ENCODE measurements at regions of chr14 and their contacts with region 1.

Region 1: DNA sequence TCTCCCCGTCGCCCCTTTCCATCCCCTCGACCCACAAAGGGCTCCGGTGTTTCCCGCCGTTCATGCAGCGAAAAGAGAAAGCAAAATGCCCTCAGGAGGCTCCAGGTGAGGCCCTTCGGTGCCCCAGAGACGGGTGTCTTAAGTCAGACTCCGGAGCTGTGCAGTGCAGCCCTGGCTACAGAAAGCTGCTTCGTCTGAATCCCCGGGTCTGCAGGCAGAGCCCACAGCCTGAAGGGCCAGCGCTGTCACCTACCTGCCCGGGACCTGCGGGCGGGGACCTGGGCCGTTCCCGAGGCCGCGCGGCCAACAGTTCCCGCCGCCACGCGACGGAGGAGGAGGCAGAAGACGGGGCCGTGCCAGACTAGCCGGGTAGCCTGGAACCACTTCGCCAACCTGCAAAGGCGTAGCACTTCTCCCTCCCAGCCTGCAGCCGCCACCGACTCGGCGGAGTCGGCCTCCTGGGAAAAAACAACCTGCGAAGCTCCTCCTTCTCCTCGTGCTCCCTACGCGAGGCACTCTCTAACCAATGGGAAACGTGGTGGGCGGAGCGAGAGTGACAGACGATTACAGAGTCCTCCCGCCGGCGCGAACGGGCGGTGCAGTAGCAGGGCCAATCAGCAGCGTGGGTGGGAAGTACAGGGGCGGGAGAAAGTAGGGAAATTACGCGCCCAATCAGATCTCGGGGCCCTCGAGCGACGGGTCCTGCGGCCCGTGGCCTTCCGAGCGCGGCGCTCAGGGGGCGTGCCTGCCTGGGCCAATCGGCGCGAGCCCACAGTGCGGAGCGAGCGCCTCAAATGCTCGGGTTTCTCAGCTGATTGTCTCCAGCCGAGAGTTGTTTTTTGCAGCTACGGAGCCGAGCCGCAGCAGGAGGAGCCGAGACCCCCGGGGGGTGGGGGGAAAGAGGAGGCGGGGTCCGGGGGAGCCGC is at the starts of genes GPR137C and TXNDC16:
- DNase-seq: peak; percentile 100
- H3K4me3 Mint-ChIP-seq: peak within 1 kb of the TSS; percentile 93
- H3K27ac Mint-ChIP-seq: peak within 1 kb of the TSS; percentile 77
- H3K4me1 Mint-ChIP-seq: peaks cover 29% of the 10 kb centered on the region
- H3K27me3 Mint-ChIP-seq: peaks cover 29% of the 10 kb centered on the region
- total RNA-seq, gene GPR137C: 0.07 and 0.24 TPM in 2 replicates
- total RNA-seq, gene TXNDC16: 4.7 and 6.2 TPM in 2 replicates

Region 2: DNA sequence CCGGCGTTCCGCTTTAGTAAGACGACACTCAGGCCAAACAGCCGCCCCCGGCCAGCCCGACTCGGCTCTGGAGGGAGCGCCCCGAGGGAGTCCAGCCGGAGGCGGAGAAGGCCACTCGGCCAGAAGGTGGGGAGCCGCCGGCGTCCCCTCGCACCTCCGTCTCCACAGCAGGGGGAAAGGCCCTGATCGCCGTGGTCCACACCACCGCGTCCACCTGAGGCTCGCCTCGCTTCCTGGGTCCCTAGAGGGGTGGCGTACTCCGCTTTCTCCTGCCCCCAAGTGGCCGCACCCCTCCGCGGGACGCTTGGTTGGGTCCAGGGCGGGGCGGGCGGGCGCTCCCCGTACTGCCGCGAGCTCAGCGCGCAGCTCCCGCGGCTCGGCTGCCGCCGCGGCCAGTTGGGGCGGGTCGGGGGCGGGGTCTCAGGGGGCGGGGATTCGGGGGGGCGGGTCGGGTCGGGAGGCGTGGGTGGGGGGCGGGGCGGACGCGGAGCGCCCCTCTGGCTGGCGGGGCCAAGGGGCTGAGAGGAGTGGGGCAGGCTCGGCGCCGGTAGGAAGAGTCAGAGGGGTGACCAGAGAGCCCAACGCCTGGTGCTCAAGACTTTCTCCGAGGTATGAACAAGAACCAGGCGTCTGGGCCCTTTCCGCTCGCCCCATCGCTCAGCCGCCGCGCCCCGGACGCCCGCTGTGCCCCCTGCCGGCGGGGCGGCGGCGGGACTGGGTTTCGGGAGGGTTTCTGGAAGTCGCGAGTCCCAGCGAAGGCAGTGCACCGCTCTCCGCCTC is 900.7 kb before region 1 on chr14 and contains the start of gene FRMD6:
- intact Hi-C with region 1: loop called (anchors 5 kb)
- DNase-seq: peak; percentile 94
- H3K4me3 Mint-ChIP-seq: peak within 1 kb of the TSS; percentile 88
- H3K27ac Mint-ChIP-seq: peak within 1 kb of the TSS; percentile 78
- H3K4me1 Mint-ChIP-seq: peaks cover 19% of the 10 kb centered on the region
- H3K27me3 Mint-ChIP-seq: peaks cover 17% of the 10 kb centered on the region
- total RNA-seq, gene FRMD6: 5.5 and 7.4 TPM in 2 replicates

Region 3: DNA sequence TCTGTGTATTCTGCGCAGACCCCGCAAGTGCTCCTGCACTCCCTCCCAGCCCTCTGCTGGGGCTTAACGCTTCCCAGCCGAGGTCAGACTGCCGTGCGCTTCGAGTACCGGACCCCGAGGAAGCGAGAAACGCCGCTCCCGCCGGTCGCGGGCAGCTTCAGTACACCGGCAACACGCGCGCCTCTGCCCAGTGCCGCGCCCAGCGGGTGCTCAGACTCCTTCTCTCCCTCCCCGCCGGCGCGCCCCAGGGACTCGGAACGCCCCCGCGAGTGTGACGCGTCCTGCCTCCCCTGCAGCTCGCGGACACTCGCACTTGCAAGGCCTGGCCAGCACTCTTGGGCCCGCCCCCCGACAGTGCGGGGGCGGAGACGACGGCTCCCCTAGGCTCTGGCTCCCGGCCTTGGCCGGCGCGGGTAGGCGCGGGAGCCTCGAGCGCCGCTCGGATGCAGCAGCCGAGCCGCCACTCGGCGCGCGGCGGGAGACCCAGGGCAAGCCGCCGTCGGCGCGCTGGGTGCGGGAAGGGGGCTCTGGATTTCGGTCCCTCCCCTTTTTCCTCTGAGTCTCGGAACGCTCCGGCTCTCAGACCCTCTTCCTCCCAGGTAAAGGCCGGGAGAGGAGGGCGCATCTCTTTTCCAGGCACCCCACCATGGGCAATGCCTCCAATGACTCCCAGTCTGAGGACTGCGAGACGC is 238.3 kb before region 1 on chr14 and contains the start of gene PTGER2:
- intact Hi-C with region 1: loop called (anchors 2 kb)
- DNase-seq: peak; percentile 97
- H3K4me3 Mint-ChIP-seq: peak within 1 kb of the TSS; percentile 99
- H3K27ac Mint-ChIP-seq: peak within 1 kb of the TSS; percentile 99
- H3K4me1 Mint-ChIP-seq: peaks cover 62% of the 10 kb centered on the region
- H3K27me3 Mint-ChIP-seq: no peaks in the 10 kb centered on the region
- total RNA-seq, gene PTGER2: 66.7 and 69.9 TPM in 2 replicates

Region 4: DNA sequence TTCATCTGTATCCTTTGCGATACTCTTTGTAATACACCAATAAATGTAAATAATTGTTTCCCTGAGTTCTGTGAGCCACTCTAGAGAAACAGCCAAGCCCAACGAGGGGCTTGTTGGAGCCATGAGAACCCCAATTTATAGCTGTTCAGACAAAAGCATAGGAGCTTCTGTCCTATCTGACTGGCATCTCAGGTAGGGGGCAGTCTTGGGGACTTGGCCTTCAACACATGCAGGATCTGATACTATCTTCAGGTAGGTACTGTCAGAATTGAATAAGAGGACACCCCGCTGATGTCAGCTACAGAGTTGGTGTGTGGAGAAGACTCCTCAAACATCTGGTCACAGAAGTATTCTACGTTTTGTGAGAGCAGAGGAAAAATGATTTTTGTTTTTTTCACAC is 25.3 kb before region 1 on chr14:
- intact Hi-C with region 1: loop called (anchors 2 kb)
- DNase-seq: peak; percentile 58
- H3K4me3 Mint-ChIP-seq: no peak overlapping the region
- H3K27ac Mint-ChIP-seq: no peak overlapping the region
- H3K4me1 Mint-ChIP-seq: peaks cover 3% of the 10 kb centered on the region
- H3K27me3 Mint-ChIP-seq: no peaks in the 10 kb centered on the region

Region 5: GRCh38 chr14:52695481-52696091 is 143.3 kb after region 1 on chr14 and contains the start of gene ERO1A:
- intact Hi-C with region 1: loop called (anchors 1 kb)
- DNase-seq: peak; percentile 92
- H3K4me3 Mint-ChIP-seq: peak within 1 kb of the TSS; percentile 96
- H3K27ac Mint-ChIP-seq: peak within 1 kb of the TSS; percentile 99
- H3K4me1 Mint-ChIP-seq: peaks cover 33% of the 10 kb centered on the region
- H3K27me3 Mint-ChIP-seq: no peaks in the 10 kb centered on the region
- total RNA-seq, gene ERO1A: 170 and 171 TPM in 2 replicates

Region 6: DNA sequence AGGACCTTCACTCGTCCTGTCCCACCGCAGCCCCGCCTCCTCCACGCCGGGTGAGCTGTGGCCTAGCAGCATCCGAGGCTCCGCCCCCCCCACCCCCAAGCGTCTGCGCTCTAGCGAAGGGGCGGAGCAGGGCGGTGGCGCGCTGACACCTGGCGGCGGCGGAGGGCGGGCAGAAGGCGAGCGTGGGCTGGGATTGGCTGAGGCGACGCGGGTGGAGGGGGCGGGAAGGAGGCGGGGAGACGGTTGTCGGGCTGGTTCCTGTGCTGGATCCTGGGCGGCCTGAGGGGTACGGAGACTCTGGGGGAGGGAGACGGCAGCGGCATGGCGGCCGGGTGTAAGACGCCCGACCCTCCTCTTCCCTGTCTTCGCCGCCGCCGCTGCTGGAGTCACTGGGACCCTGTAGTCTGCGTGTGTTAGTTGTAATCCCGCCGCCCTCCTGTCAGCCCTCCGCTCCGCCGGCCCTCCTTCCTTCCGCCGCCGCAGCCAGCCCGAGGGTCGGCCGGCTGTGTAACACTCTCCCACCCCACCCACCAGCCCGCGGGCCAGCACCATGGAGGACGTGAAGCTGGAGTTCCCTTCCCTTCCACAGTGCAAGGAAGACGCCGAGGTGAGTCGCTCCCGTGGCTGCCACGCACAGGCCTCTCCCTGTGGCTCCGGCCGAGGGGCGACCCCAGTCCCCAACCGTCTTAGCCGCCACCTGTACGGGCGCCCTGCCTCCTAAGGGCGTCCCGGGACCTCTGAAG is 177.8 kb after region 1 on chr14 and contains the start of gene STYX:
- intact Hi-C with region 1: loop called (anchors 2 kb)
- DNase-seq: peak; percentile 99
- H3K4me3 Mint-ChIP-seq: peak within 1 kb of the TSS; percentile 96
- H3K27ac Mint-ChIP-seq: peak within 1 kb of the TSS; percentile 88
- H3K4me1 Mint-ChIP-seq: peaks cover 21% of the 10 kb centered on the region
- H3K27me3 Mint-ChIP-seq: no peaks in the 10 kb centered on the region
- total RNA-seq, gene STYX: 18.3 and 19.7 TPM in 2 replicates

Region 7: DNA sequence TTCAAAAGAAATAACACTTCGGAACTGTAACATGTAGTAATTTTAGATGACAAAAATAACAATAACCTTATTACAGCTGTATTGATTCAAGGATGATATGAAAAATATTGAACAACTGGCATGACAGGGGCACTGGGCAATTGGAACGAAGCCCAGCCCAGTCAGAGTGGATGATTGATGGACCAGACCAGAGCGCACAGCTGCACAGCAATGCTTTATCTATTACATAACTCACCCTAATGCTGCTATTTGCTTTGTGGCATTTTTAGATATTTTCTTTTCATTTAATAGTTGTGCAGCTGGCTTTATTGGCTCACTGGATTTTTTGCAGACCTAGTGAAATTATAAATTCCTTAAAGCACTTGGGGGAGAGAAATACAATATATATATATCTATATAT is 425.5 kb after region 1 on chr14:
- intact Hi-C with region 1: no loop called
- DNase-seq: no peak
- H3K4me3 Mint-ChIP-seq: no peak overlapping the region
- H3K27ac Mint-ChIP-seq: no peak overlapping the region
- H3K4me1 Mint-ChIP-seq: peaks cover 4% of the 10 kb centered on the region
- H3K27me3 Mint-ChIP-seq: peaks cover 7% of the 10 kb centered on the region

Region 8: DNA sequence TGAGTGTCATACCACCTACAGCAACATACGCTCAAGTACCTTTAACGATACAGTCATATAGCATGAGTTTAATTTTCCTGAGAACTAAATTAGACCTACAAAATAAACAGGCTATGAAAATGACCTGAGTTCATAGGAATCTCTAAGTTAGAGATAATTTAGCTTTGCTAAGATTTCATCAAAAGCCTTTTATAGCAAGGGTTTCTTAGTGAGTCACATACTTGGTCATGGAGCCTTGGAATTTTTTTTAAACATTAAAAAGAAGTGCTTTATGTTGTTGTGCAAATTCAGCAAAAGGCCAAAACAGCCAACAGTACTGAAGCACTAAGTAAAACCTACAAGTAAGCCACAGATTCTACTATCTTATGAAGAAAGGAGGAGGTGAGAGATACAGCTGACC is 492.2 kb after region 1 on chr14:
- intact Hi-C with region 1: no loop called
- DNase-seq: no peak
- H3K4me3 Mint-ChIP-seq: no peak overlapping the region
- H3K27ac Mint-ChIP-seq: no peak overlapping the region
- H3K4me1 Mint-ChIP-seq: peaks cover 7% of the 10 kb centered on the region
- H3K27me3 Mint-ChIP-seq: no peaks in the 10 kb centered on the region